ENCODE measurements at regions of chr12 and their contacts with region 1.

Region 1: DNA sequence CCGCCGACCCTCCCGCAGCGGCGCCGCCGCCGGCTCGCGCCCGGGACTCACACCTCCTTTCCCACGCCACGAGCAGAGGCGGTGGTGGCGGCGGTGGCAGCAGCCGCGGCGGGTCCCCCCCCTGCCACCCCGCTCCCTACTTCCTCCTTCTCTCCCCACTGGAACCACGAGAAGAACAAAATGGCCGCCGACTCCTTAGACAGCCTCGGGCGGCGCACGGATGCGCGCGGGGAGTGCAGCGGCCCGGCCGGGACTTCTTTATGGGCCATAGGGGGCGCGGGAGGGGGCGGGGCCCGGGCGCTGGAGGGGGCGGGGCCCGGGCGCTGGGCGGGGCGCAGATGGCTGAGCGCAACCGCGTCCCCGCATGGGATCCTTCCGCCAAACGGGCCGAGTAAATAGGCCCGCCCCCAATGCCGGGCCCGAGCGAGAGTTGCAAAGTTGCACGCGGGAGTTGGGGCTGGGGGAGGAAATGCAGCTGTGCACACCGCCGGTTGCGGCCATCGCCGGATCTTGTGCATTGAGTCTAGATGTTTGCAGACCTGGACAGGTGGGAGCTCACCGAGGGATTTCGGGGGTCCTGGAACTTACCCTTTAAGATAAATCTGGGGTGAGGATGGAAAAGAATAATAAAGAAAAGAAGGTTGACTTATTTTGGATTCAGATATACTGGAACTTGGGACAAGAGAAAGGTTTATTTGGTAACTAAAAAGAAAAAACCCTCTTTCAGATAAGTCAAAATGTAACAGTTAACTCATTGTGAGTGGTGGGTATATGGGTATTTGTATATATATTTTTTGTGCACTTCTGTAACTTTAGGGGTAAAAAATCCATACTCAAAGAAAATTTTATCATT is at the start of gene PPP1CC:
- DNase-seq: peak; percentile 81 to 93 (median 91)
- ATAC-seq: peak; percentile 98
- H3K4me3 ChIP-seq: peak within 1 kb of the TSS; percentile 68
- H3K4me3 Mint-ChIP-seq: peak within 1 kb of the TSS; percentile 89 to 100 (median 99)
- H3K27ac ChIP-seq: peak within 1 kb of the TSS; percentile 79
- H3K27ac Mint-ChIP-seq: peak within 1 kb of the TSS; percentile 94 to 99 (median 97)
- H3K4me1 ChIP-seq: peaks cover 18 to 21% of the 10 kb centered on the region in 2 donors
- H3K4me1 Mint-ChIP-seq: peaks cover 34 to 52% (median 46%) of the 10 kb centered on the region in 7 donors
- H3K27me3 ChIP-seq: no peaks in the 10 kb centered on the region
- H3K27me3 Mint-ChIP-seq: no peaks in the 10 kb centered on the region
- total RNA-seq, gene PPP1CC: 108 to 218 (median 145) TPM

Region 2: DNA sequence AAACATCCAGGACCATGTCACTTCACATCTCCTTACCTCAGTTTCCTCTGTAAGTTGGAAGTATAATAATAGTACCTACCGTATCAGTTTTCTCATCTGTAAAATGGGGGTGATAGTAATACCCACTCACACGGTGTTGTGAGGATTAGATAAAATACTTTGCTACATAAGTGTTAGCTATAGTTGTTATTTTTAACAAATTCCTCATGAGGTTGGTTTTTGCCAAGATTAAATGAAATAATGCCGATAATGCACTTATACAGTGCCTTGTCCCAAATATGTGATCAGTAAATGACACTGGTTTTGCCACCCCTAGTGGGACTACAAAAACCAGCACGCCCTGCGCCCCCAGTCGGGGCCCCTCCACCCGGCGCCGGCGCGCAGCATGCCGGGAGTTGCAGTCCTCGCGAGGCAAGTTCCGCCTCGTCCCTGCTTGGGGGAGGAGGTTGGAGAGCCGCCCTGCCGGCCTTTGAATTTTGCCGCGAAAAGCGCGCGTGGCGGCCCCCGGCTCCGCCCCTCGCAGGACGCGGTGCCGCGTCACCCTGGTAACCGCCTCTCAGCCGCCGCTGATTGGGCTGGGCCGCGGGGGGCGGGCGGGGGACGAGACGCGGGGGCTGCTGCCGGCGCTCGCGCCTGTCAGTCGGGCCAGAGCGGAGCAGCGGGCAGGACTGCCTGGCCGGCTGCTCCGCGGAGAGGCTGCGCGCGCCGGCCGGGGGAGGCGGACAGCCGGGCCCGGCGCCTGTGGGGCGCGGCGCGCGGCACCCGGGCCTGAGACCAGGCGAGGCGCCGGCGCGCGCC is 1029.6 kb before region 1 on chr12 and contains the start of gene FAM222A:
- CTCF ChIA-PET with region 1: no interaction called
- POLR2A ChIA-PET with region 1: no interaction called
- intact Hi-C with region 1: loop called in 1 of 2 experiments (anchors 5 kb)
- DNase-seq: peak; percentile 94 to 99 (median 98)
- ATAC-seq: peak; percentile 94
- H3K4me3 ChIP-seq: peak within 1 kb of the TSS; percentile 41
- H3K4me3 Mint-ChIP-seq: peak within 1 kb of the TSS; percentile 57 to 81 (median 72)
- H3K27ac ChIP-seq: peak within 1 kb of the TSS; percentile 55
- H3K27ac Mint-ChIP-seq: peak within 1 kb of the TSS in 1 of 9 donors; percentile 48
- H3K4me1 ChIP-seq: peaks cover 3 to 11% of the 10 kb centered on the region in 2 donors
- H3K4me1 Mint-ChIP-seq: peaks cover 0 to 4% (median 0%) of the 10 kb centered on the region in 7 donors
- H3K27me3 ChIP-seq: peaks cover 0 to 6% of the 10 kb centered on the region in 2 donors
- H3K27me3 Mint-ChIP-seq: peaks cover 29 to 65% (median 30%) of the 10 kb centered on the region in 5 donors
- total RNA-seq, gene FAM222A: 0.24 to 1.6 (median 0.80) TPM

Region 3: GRCh38 chr12:110141389-110141788 is 601.6 kb before region 1 on chr12:
- CTCF ChIA-PET with region 1: no interaction called
- POLR2A ChIA-PET with region 1: no interaction called
- intact Hi-C with region 1: no loop called
- DNase-seq: no peak
- ATAC-seq: no peak
- H3K4me3 ChIP-seq: no peak overlapping the region
- H3K4me3 Mint-ChIP-seq: no peak overlapping the region
- H3K27ac ChIP-seq: no peak overlapping the region
- H3K27ac Mint-ChIP-seq: no peak overlapping the region
- H3K4me1 ChIP-seq: no peaks in the 10 kb centered on the region
- H3K4me1 Mint-ChIP-seq: no peaks in the 10 kb centered on the region
- H3K27me3 ChIP-seq: no peaks in the 10 kb centered on the region
- H3K27me3 Mint-ChIP-seq: no peaks in the 10 kb centered on the region

Region 4: GRCh38 chr12:110280779-110281548 is 462.0 kb before region 1 on chr12 and contains the start of gene ATP2A2:
- CTCF ChIA-PET with region 1: no interaction called
- POLR2A ChIA-PET with region 1: no interaction called
- intact Hi-C with region 1: loop called (anchors 1 to 2 kb)
- DNase-seq: peak; percentile 87 to 93 (median 91)
- ATAC-seq: peak; percentile 96
- H3K4me3 ChIP-seq: peak within 1 kb of the TSS; percentile 83
- H3K4me3 Mint-ChIP-seq: peak within 1 kb of the TSS; percentile 87 to 96 (median 93)
- H3K27ac ChIP-seq: peak within 1 kb of the TSS; percentile 92
- H3K27ac Mint-ChIP-seq: peak within 1 kb of the TSS; percentile 84 to 93 (median 89)
- H3K4me1 ChIP-seq: peaks cover 12 to 27% of the 10 kb centered on the region in 2 donors
- H3K4me1 Mint-ChIP-seq: peaks cover 39 to 50% (median 48%) of the 10 kb centered on the region in 7 donors
- H3K27me3 ChIP-seq: no peaks in the 10 kb centered on the region
- H3K27me3 Mint-ChIP-seq: peaks cover 0 to 11% (median 0%) of the 10 kb centered on the region in 5 donors
- total RNA-seq, gene ATP2A2: 81.4 to 160 (median 83.9) TPM

Region 5: GRCh38 chr12:110613771-110614684 is 128.9 kb before region 1 on chr12 and contains the start of gene TCTN1:
- CTCF ChIA-PET with region 1: no interaction called
- POLR2A ChIA-PET with region 1: no interaction called
- intact Hi-C with region 1: loop called (anchors 1 to 2 kb)
- DNase-seq: peak; percentile 88 to 98 (median 93)
- ATAC-seq: peak; percentile 100
- H3K4me3 ChIP-seq: peak within 1 kb of the TSS; percentile 75
- H3K4me3 Mint-ChIP-seq: peak within 1 kb of the TSS; percentile 81 to 89 (median 88)
- H3K27ac ChIP-seq: peak within 1 kb of the TSS; percentile 87
- H3K27ac Mint-ChIP-seq: peak within 1 kb of the TSS; percentile 31 to 92 (median 87)
- H3K4me1 ChIP-seq: peaks cover 4 to 6% of the 10 kb centered on the region in 2 donors
- H3K4me1 Mint-ChIP-seq: peaks cover 0 to 10% (median 4%) of the 10 kb centered on the region in 7 donors
- H3K27me3 ChIP-seq: no peaks in the 10 kb centered on the region
- H3K27me3 Mint-ChIP-seq: no peaks in the 10 kb centered on the region
- total RNA-seq, gene TCTN1: 5.2 to 13.0 (median 10.2) TPM

Region 6: DNA sequence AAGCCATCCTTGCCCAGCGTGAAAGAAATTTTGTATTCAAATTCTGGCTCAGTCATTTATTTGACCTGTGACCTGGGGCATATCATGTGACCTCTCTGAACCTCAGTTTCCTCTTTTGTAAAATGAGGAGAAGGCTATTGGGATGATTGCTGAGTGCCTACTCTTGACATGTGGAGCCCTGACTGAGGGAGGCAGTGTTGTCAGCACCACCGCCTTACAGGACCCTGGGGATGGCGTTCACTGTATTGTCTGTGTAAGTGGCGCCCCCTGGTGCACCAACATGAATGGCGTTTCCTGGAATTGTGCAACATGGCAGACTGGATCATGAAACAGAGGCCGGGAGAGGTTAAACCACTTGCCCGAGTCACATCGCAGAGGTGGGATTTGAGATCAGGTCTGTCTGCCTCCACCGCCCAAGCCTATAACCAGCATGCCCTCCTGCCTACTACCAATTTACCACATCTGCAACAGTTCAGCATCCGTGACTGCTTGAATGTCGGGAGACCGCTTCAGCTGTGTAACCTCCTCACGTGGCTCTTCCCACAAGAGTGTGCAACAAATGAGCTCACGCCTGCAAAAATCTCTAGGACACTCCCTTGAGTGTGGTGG is 83.8 kb after region 1 on chr12:
- CTCF ChIA-PET with region 1: interaction called, 3 read pairs
- POLR2A ChIA-PET with region 1: interaction called, 3 read pairs
- intact Hi-C with region 1: loop called (anchors 1 kb)
- DNase-seq: peak; percentile 61 to 85 (median 77)
- ATAC-seq: peak; percentile 98
- H3K4me3 ChIP-seq: no peak overlapping the region
- H3K4me3 Mint-ChIP-seq: peak overlapping the region in 9 of 10 donors; percentile 35 to 75 (median 58)
- H3K27ac ChIP-seq: no peak overlapping the region
- H3K27ac Mint-ChIP-seq: peak overlapping the region in 8 of 9 donors; percentile 4 to 81 (median 20)
- H3K4me1 ChIP-seq: no peaks in the 10 kb centered on the region
- H3K4me1 Mint-ChIP-seq: peaks cover 0 to 10% (median 6%) of the 10 kb centered on the region in 7 donors
- H3K27me3 ChIP-seq: no peaks in the 10 kb centered on the region
- H3K27me3 Mint-ChIP-seq: peaks cover 0 to 4% (median 0%) of the 10 kb centered on the region in 5 donors

Region 7: GRCh38 chr12:110940933-110941332 is 198.0 kb after region 1 on chr12:
- CTCF ChIA-PET with region 1: no interaction called
- POLR2A ChIA-PET with region 1: no interaction called
- intact Hi-C with region 1: no loop called
- DNase-seq: no peak
- ATAC-seq: no peak
- H3K4me3 ChIP-seq: no peak overlapping the region
- H3K4me3 Mint-ChIP-seq: no peak overlapping the region
- H3K27ac ChIP-seq: no peak overlapping the region
- H3K27ac Mint-ChIP-seq: no peak overlapping the region
- H3K4me1 ChIP-seq: peaks cover 0 to 5% of the 10 kb centered on the region in 2 donors
- H3K4me1 Mint-ChIP-seq: peaks cover 0 to 7% (median 6%) of the 10 kb centered on the region in 7 donors
- H3K27me3 ChIP-seq: no peaks in the 10 kb centered on the region
- H3K27me3 Mint-ChIP-seq: peaks cover 7 to 24% (median 18%) of the 10 kb centered on the region in 5 donors

Region 8: DNA sequence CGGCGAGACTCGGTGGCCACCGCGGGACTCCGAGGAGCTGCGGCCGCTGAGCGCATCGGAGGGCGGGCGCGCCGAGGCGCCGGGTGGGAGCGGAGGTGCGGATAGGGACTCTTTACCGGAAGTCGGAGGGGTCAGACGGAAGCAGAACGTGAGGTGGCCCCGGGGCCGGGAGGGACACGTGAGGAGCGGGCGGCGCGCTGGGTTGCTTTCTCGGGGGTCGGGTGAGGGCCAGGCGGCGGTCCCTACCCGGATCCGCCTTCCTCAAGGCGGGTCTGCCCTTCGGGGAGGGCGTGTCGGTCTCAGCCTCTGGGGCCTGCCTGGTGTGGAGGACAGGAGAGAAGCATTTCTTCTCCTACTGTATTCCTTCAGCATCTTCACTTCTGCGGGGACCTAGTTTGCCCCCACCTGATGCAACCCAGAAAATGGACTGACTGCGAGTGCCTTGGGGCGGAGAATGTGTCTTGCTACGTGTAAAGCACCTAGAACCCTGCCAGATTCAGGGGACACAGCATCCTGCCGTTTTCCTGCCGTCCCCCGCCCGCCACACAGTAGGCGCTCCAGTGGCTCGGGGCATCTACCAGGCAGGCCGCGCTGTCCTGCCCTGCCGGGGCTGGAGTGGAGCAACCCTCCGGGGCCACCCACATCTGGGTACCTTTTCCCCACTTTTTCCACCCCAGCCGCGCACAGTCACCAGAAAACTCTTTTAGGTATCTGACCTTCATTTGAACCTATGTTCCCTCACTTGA is 856.7 kb after region 1 on chr12:
- CTCF ChIA-PET with region 1: no interaction called
- POLR2A ChIA-PET with region 1: no interaction called
- intact Hi-C with region 1: loop called (anchors 5 kb)
- DNase-seq: peak; percentile 82 to 94 (median 87)
- ATAC-seq: peak; percentile 89
- H3K4me3 ChIP-seq: peak overlapping the region; percentile 80
- H3K4me3 Mint-ChIP-seq: peak overlapping the region; percentile 74 to 93 (median 86)
- H3K27ac ChIP-seq: peak overlapping the region; percentile 80
- H3K27ac Mint-ChIP-seq: peak overlapping the region; percentile 83 to 93 (median 89)
- H3K4me1 ChIP-seq: peaks cover 3 to 5% of the 10 kb centered on the region in 2 donors
- H3K4me1 Mint-ChIP-seq: peaks cover 22 to 39% (median 26%) of the 10 kb centered on the region in 7 donors
- H3K27me3 ChIP-seq: no peaks in the 10 kb centered on the region
- H3K27me3 Mint-ChIP-seq: no peaks in the 10 kb centered on the region

Measured in naive thymus-derived CD4-positive, alpha-beta T cell (primary cell).